ENCODE measurements at regions of chr20 and their contacts with region 1.

Region 1: GRCh38 chr20:18507218-18508021 is at the start of gene SEC23B:
- DNase-seq: peak; percentile 99
- H3K4me3 Mint-ChIP-seq: peak within 1 kb of the TSS; percentile 100
- H3K27ac Mint-ChIP-seq: peak within 1 kb of the TSS; percentile 100
- H3K4me1 Mint-ChIP-seq: peaks cover 45% of the 10 kb centered on the region
- H3K27me3 Mint-ChIP-seq: no peaks in the 10 kb centered on the region
- total RNA-seq, gene SEC23B: 66.9 to 69.2 TPM

Region 2: GRCh38 chr20:18466894-18467730 is 40.3 kb before region 1 on chr20 and contains the starts of genes DZANK1 and POLR3F:
- CTCF ChIA-PET with region 1: interaction called, 5 read pairs
- intact Hi-C with region 1: loop called (anchors 1 kb)
- DNase-seq: peak; percentile 94
- H3K4me3 Mint-ChIP-seq: peak within 1 kb of the TSS; percentile 92
- H3K27ac Mint-ChIP-seq: peak within 1 kb of the TSS; percentile 84
- H3K4me1 Mint-ChIP-seq: peaks cover 32% of the 10 kb centered on the region
- H3K27me3 Mint-ChIP-seq: no peaks in the 10 kb centered on the region
- total RNA-seq, gene DZANK1: 0.79 to 0.94 TPM
- total RNA-seq, gene POLR3F: 7.0 to 8.3 TPM

Region 3: DNA sequence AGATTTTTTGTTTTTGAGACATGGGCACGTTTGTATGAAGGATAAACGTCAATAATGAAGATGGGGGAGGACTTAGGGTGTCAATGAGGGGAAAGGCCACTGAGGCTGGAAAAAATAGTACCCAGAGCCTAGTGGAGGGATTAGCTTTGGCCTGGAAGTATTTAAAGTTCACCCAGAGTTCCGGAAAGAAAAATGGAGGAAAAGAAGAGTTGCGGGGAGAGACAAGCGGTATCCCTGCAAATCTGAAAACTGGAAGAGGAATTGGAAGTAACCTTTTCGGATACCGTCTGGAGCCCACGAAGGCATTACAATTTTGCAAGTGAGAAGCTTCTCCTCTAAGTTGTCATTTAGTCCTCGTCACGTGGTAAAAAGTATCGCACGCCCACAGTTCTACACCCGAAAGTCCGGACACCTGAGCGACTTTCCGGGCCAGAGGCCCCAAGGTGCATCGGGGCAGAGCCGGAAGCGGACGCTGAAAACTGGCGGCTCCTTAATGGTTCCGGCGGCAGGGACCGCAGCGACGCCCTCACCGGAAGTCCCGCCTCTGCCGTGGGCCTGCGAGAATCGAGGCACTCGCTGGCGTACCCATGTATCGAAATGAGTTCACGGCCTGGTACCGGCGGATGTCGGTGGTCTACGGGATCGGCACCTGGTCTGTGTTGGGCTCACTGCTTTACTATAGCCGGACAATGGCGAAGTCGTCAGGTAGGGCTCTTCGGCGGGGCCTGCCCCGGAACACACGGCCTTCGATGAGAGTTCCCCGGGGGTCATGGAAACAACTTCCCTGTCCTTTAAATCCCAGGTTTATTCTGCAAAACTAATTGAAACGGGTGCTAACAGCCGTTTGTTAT is 59.7 kb after region 1 on chr20 and contains the start of gene SMIM26:
- CTCF ChIA-PET with region 1: interaction called, 3 read pairs
- intact Hi-C with region 1: loop called (anchors 1 kb)
- DNase-seq: peak; percentile 95
- H3K4me3 Mint-ChIP-seq: peak within 1 kb of the TSS; percentile 94
- H3K27ac Mint-ChIP-seq: peak within 1 kb of the TSS; percentile 95
- H3K4me1 Mint-ChIP-seq: peaks cover 19% of the 10 kb centered on the region
- H3K27me3 Mint-ChIP-seq: no peaks in the 10 kb centered on the region
- total RNA-seq, gene SMIM26: 57.3 to 60.0 TPM

Region 4: GRCh38 chr20:18793625-18794427 is 286.4 kb after region 1 on chr20:
- CTCF ChIA-PET with region 1: no interaction called
- intact Hi-C with region 1: loop called (anchors 5 kb)
- DNase-seq: peak; percentile 93
- H3K4me3 Mint-ChIP-seq: peak overlapping the region; percentile 91
- H3K27ac Mint-ChIP-seq: peak overlapping the region; percentile 94
- H3K4me1 Mint-ChIP-seq: peaks cover 12% of the 10 kb centered on the region
- H3K27me3 Mint-ChIP-seq: peaks cover 8% of the 10 kb centered on the region

Region 5: GRCh38 chr20:20052074-20052970 is 1544.9 kb after region 1 on chr20 and contains the starts of genes CFAP61 and CRNKL1:
- CTCF ChIA-PET with region 1: no interaction called
- intact Hi-C with region 1: loop called (anchors 1 kb)
- DNase-seq: peak; percentile 97
- H3K4me3 Mint-ChIP-seq: peak within 1 kb of the TSS; percentile 97
- H3K27ac Mint-ChIP-seq: peak within 1 kb of the TSS; percentile 96
- H3K4me1 Mint-ChIP-seq: peaks cover 14% of the 10 kb centered on the region
- H3K27me3 Mint-ChIP-seq: peaks cover 5% of the 10 kb centered on the region
- total RNA-seq, gene CFAP61: not detected
- total RNA-seq, gene CRNKL1: 14.1 to 15.7 TPM

Measured in activated naive CD4-positive, alpha-beta T cell treated with anti-CD3 and anti-CD28 coated beads for 36 hours (primary cell).